Tibial artery (tissue), 4 donors: ENCODE measurements at regions of chr17 and their contacts with region 1.

Region 1: DNA sequence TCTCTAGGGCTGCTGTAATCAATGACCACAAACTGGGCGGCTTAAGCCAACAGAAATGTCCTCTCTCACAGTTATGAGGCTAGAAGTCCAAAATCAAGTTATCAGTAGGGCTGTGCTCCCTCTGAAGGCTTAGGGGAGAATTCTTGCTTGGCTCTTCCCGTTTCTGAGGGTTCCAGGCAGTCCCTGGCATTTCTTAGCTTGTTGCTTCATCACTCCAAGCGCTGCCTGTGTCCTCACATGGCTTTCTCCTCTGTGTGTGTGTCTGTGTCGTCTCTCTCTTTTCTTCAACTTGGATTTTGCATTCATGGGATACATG is 13.7 kb upstream of the CDC42EP4 start:
- DNase-seq: peak; percentile 65 to 78
- H3K4me3 ChIP-seq: no peak overlapping the region
- H3K27ac ChIP-seq: no peak overlapping the region
- H3K4me1 ChIP-seq: peaks cover 0 to 6% (median 0%) of the 10 kb centered on the region in 4 donors
- H3K27me3 ChIP-seq: peaks cover 0 to 36% of the 10 kb centered on the region in 2 donors
- CTCF ChIP-seq: peak in 1 of 2 experiments; percentile 13

Region 2: DNA sequence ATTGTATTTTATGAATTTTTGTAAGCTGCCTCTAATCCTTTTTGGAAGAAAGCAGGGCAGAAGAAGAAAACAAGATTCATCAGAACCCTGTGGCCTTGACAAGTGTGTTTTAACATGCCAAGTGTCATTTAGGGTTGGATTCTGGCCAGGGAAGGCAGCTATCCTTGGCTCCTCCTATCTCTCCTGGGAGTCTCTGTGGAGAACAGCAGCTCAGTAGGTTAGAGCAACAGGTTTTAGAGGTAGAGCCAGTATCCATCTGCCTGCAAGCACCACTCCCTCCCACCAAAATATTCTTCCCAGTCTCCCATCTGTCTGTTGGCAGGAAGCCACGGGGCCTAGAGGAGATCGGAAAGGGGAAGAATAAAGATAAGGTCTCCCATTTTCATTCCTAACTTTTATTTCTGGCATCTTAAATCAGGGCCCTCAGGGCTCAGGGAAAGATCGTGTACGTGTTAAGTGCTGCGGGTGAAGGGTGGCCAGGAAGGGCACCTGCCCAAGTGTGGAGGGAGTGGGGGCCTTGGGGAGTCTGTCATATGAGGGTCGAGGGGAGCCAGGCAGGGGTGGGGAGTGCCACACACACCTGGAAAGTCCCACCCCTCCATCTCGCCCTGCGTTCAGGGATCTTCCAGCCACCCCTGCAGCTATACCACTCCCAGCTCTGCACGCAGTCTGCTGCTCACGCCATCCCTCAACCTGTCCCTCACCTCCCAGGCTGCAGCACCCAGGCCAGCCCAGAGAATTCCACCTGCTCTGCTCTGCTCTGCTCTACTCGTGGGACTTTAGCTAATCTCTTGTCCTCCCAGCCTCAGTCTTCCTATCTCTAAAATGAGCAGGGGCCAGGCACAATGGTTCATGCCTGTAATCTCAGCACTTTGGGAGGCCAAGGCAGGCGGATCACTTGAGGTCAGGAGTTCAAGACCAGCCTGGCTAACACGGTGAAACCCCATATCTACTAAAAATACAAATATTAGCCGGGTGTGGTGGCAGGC is 46.7 kb before region 1 on chr17:
- intact Hi-C with region 1: loop called (anchors 10 kb)
- DNase-seq: peak in 1 of 2 donors; percentile 51
- H3K4me3 ChIP-seq: no peak overlapping the region
- H3K27ac ChIP-seq: peak overlapping the region; percentile 23 to 53
- H3K4me1 ChIP-seq: peaks cover 5 to 35% (median 28%) of the 10 kb centered on the region in 4 donors
- H3K27me3 ChIP-seq: no peaks in the 10 kb centered on the region
- CTCF ChIP-seq: no peak

Region 3: GRCh38 chr17:73311781-73312641 is 13.5 kb before region 1 on chr17 and contains the start of gene CDC42EP4:
- intact Hi-C with region 1: no loop called
- DNase-seq: peak; percentile 95 to 98
- H3K4me3 ChIP-seq: peak within 1 kb of the TSS; percentile 76 to 94
- H3K27ac ChIP-seq: peak within 1 kb of the TSS; percentile 97 to 98
- H3K4me1 ChIP-seq: peaks cover 0 to 43% (median 36%) of the 10 kb centered on the region in 4 donors
- H3K27me3 ChIP-seq: no peaks in the 10 kb centered on the region
- CTCF ChIP-seq: no peak